Thyroid gland (tissue), 4 donors: ENCODE measurements at regions of chr10 and their contacts with region 1.

Region 1: GRCh38 chr10:34666008-34666705 is 148.9 kb downstream of the PARD3 start:
- DNase-seq: peak; percentile 67 to 69
- H3K4me3 ChIP-seq: no peak overlapping the region
- H3K27ac ChIP-seq: no peak overlapping the region
- H3K4me1 ChIP-seq: no peaks in the 10 kb centered on the region
- H3K27me3 ChIP-seq: no peaks in the 10 kb centered on the region
- CTCF ChIP-seq: peak; percentile 27 to 88 (median 72)
- POLR2A ChIP-seq: no peak

Region 2: GRCh38 chr10:34905200-34905927 is 239.2 kb after region 1 on chr10:
- intact Hi-C with region 1: no loop called
- DNase-seq: no peak
- H3K4me3 ChIP-seq: no peak overlapping the region
- H3K27ac ChIP-seq: peak overlapping the region; percentile 10 to 72 (median 50)
- H3K4me1 ChIP-seq: peaks cover 4 to 8% of the 10 kb centered on the region in 2 donors
- H3K27me3 ChIP-seq: no peaks in the 10 kb centered on the region
- CTCF ChIP-seq: no peak
- POLR2A ChIP-seq: no peak

Region 3: GRCh38 chr10:34960983-34961382 is 294.8 kb after region 1 on chr10:
- intact Hi-C with region 1: loop called (anchors 10 kb)
- DNase-seq: peak; percentile 59 to 66
- H3K4me3 ChIP-seq: no peak overlapping the region
- H3K27ac ChIP-seq: peak overlapping the region in 1 of 3 donors; percentile 63
- H3K4me1 ChIP-seq: peaks cover 26 to 31% of the 10 kb centered on the region in 2 donors
- H3K27me3 ChIP-seq: no peaks in the 10 kb centered on the region
- CTCF ChIP-seq: peak in 4 of 6 experiments; percentile 20 to 78 (median 54)
- POLR2A ChIP-seq: no peak